Activated CD4-positive, alpha-beta T cell treated with anti-CD3 and anti-CD28 coated beads, Interleukin-2, amount 10 ng/mL, durations not matched to agents 7 days and 5 days (primary cell): ENCODE measurements at regions of chr17 and their contacts with region 1.

Region 1: DNA sequence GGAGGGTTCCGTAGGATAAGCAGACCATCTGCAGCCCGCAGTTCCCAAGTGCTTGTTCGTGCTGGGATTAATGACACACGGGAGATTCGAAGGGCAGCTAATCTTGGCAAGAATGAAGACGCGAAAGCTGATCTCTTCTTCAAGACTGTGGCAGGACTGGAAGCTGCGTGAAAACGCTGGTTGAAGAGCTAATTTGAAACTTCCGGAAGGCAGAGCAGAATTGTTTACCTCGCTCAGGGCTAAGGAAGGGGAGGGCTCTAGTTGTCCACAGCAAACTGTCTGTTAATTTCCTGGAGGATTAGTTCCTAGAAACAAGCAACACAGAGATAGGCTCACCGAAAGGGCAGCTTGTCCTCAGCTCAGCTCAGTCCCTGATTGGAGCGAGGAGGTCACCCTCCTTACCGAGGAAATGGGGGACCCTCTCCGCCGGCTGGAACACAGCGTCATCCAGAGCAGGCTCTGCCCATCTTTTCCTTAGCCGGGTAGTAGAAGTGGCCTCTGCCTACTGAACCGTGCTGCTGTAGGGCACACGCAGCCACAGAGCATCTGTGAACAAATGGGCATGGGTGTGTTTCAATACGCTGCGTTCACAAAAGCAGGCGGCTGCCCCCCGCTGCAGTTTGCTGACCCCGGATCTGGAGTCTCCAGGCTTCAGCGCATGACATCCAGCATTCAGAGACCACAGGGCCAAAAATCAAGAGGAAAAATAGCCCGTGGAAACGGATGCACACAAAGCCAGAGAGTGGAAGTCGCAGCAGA is 16.7 kb upstream of the BAIAP2 start:
- DNase-seq: peak; percentile 67
- H3K4me3 Mint-ChIP-seq: peak overlapping the region; percentile 71
- H3K27ac Mint-ChIP-seq: peak overlapping the region; percentile 98
- H3K4me1 Mint-ChIP-seq: peaks cover 39% of the 10 kb centered on the region
- H3K27me3 Mint-ChIP-seq: peaks cover 2% of the 10 kb centered on the region

Region 2: DNA sequence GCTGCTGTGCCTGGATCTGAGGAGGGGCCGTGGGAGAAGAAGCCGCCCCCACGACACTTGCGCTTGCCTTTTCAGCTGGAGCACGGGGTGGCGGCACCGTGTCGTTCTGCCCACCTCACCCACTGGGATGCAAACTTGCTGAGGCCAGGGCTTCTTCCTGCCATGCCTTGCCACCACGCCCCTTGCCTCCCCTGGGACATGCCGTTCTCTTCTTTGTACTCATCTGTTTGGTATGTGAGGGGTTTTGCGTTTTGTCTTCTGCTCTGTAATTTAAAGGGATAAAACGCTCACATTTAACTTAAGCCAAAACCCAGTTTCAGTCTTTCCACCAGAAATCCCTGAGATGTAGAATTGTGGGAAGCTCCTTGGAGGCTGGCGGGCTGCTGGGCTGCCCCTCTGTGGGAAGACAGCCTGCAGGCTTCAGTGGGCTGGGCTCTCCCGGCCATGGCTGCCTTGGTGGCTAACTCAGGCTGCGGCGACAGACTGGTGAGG is 293.4 kb before region 1 on chr17:
- CTCF ChIA-PET with region 1: no interaction called
- POLR2A ChIA-PET with region 1: no interaction called
- DNase-seq: no peak
- H3K4me3 Mint-ChIP-seq: no peak overlapping the region
- H3K27ac Mint-ChIP-seq: no peak overlapping the region
- H3K4me1 Mint-ChIP-seq: peaks cover 65% of the 10 kb centered on the region
- H3K27me3 Mint-ChIP-seq: no peaks in the 10 kb centered on the region

Region 3: GRCh38 chr17:81034168-81034777 is 16.1 kb after region 1 on chr17:
- CTCF ChIA-PET with region 1: interaction called, 11 read pairs
- POLR2A ChIA-PET with region 1: no interaction called
- DNase-seq: no peak
- H3K4me3 Mint-ChIP-seq: peak overlapping the region; percentile 58
- H3K27ac Mint-ChIP-seq: peak overlapping the region; percentile 41
- H3K4me1 Mint-ChIP-seq: peaks cover 14% of the 10 kb centered on the region
- H3K27me3 Mint-ChIP-seq: peaks cover 31% of the 10 kb centered on the region

Region 4: GRCh38 chr17:81109957-81110356 is 91.7 kb after region 1 on chr17:
- CTCF ChIA-PET with region 1: no interaction called
- POLR2A ChIA-PET with region 1: no interaction called
- DNase-seq: no peak
- H3K4me3 Mint-ChIP-seq: no peak overlapping the region
- H3K27ac Mint-ChIP-seq: no peak overlapping the region
- H3K4me1 Mint-ChIP-seq: no peaks in the 10 kb centered on the region
- H3K27me3 Mint-ChIP-seq: no peaks in the 10 kb centered on the region

Region 5: GRCh38 chr17:81125573-81126081 is 107.4 kb after region 1 on chr17:
- CTCF ChIA-PET with region 1: no interaction called
- POLR2A ChIA-PET with region 1: no interaction called
- DNase-seq: no peak
- H3K4me3 Mint-ChIP-seq: no peak overlapping the region
- H3K27ac Mint-ChIP-seq: no peak overlapping the region
- H3K4me1 Mint-ChIP-seq: no peaks in the 10 kb centered on the region
- H3K27me3 Mint-ChIP-seq: no peaks in the 10 kb centered on the region